Activated T-helper 2 cell treated with anti-CD3 and anti-CD28 coated beads, Interferon-gamma antibody, Interleukin-2, Interleukin-4, amounts not matched to agents 10 μg/mL and 5 μg/mL and 100 μg/mL, durations not matched to agents 14 hours and 24 hours and 36 hours (primary cell): ENCODE measurements at regions of chr1 and their contacts with region 1.

Region 1: DNA sequence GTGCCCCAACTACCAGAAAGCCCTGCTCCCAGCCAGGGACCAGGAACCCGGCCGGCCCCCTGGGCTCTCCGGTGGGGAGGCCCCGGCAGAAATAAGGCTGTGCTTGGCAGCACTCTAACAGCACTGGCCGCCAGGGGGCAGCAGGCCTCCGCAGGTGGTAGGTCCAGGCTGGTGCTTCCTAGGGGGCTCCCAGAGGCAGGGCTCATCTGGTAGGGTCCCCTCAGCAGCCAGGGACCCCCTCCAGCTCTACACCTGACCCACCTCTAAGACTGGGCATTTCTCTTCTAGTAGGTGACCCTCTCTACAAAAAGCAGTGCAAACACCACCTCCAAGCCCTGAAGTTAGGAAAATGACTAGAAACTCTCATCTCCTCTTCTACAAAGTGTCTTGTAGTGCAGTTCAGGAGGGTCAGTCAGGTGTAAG is 85.6 kb downstream of the STUM start:
- DNase-seq: peak; percentile 66
- H3K4me3 Mint-ChIP-seq: no peak overlapping the region
- H3K27ac Mint-ChIP-seq: no peak overlapping the region
- H3K4me1 Mint-ChIP-seq: peaks cover 37% of the 10 kb centered on the region
- H3K27me3 Mint-ChIP-seq: no peaks in the 10 kb centered on the region

Region 2: GRCh38 chr1:226308723-226309315 is 325.4 kb before region 1 on chr1 and contains the start of gene LIN9:
- intact Hi-C with region 1: no loop called
- DNase-seq: peak; percentile 89
- H3K4me3 Mint-ChIP-seq: peak within 1 kb of the TSS; percentile 89
- H3K27ac Mint-ChIP-seq: peak within 1 kb of the TSS; percentile 80
- H3K4me1 Mint-ChIP-seq: peaks cover 26% of the 10 kb centered on the region
- H3K27me3 Mint-ChIP-seq: peaks cover 18% of the 10 kb centered on the region
- total RNA-seq, gene LIN9: 9.7 and 12.7 TPM in 2 replicates

Region 3: DNA sequence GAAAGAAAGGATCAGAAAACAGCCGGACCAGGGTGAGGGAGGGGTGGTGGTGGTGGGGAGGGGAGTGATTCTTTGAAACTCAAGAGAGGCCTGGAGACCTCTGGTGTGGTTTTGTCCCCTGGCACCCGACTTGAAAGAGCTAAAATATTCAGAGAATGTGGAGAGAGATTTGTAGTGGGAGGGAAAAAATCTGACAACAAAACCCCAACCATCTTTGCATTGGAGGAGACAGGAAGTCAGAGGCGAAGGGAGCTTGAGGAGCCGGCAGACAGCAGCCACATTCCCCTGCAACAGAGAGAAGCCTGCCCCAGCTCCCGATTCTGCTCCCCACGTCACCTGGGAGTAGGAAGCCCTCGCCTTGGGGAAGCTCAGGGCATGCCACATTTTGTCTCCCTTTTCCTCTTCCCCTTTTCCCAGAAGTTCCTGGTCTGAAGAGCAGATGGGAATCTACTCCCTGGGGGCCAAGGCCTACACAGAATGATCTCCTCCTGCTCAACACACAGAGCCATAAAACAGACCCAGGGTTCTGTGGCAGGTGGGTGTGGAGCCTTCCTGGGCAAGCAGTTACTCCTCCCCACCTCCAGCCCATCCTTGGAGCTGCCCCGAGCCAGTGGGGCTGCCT is 20.0 kb after region 1 on chr1:
- intact Hi-C with region 1: loop called (anchors 2 kb)
- DNase-seq: no peak
- H3K4me3 Mint-ChIP-seq: peak overlapping the region; percentile 71
- H3K27ac Mint-ChIP-seq: peak overlapping the region; percentile 84
- H3K4me1 Mint-ChIP-seq: peaks cover 69% of the 10 kb centered on the region
- H3K27me3 Mint-ChIP-seq: no peaks in the 10 kb centered on the region

Region 4: GRCh38 chr1:226662642-226663326 is 28.6 kb after region 1 on chr1:
- intact Hi-C with region 1: loop called (anchors 1 kb)
- DNase-seq: peak; percentile 80
- H3K4me3 Mint-ChIP-seq: peak overlapping the region; percentile 5
- H3K27ac Mint-ChIP-seq: peak overlapping the region; percentile 81
- H3K4me1 Mint-ChIP-seq: peaks cover 74% of the 10 kb centered on the region
- H3K27me3 Mint-ChIP-seq: no peaks in the 10 kb centered on the region

Region 5: DNA sequence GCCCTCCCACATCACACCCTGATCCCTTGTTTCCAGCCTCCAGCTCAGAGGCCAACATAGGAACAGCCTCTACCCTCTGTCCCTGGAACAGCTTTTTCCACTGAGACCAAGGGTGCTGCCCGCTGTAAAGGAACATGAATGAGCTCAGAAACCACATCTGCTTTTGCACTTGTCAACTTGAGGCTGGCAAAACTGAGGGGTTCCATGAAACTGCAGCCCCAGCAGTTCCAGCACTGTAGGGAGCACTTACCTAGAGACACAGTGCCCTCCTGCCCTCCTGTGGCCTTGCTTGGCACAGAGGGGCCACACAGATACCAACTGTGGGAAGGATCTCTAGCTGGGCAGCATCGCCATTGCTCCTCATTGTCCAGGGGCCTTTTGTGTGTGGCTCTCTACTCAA is 53.2 kb after region 1 on chr1:
- intact Hi-C with region 1: loop called (anchors 1 kb)
- DNase-seq: no peak
- H3K4me3 Mint-ChIP-seq: no peak overlapping the region
- H3K27ac Mint-ChIP-seq: peak overlapping the region; percentile 77
- H3K4me1 Mint-ChIP-seq: peaks cover 89% of the 10 kb centered on the region
- H3K27me3 Mint-ChIP-seq: no peaks in the 10 kb centered on the region

Region 6: DNA sequence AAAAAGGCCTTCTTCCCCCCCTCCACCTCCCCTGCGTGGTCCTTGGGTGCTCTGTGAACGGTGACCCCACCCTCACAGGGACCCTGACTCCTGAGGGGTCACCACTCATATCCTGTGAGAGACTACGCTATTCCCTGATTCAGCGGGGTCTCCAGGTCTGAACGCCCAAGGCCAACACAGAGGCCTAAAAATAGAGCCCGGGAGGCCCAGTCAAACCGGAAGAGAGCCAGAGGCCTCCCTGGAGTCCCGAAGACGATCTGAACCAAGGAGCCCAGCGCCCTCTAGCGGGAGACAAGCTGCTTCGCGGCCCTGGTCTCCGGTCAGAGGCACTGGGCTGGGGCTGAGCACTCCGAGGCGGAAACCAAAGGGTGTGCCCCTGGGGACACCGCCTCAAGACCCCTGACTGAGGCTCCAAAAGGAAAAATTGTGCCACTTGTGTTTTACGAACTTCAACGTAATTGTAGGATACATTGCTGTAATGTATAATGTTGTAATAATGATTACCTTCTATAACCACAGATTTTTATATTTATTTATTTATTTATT is 193.9 kb after region 1 on chr1:
- intact Hi-C with region 1: loop called (anchors 1 kb)
- DNase-seq: peak; percentile 90
- H3K4me3 Mint-ChIP-seq: peak overlapping the region; percentile 39
- H3K27ac Mint-ChIP-seq: peak overlapping the region; percentile 90
- H3K4me1 Mint-ChIP-seq: peaks cover 21% of the 10 kb centered on the region
- H3K27me3 Mint-ChIP-seq: peaks cover 3% of the 10 kb centered on the region